T-cell (primary cell): ENCODE measurements at regions of chr20 and their contacts with region 1.

Region 1: GRCh38 chr20:3767427-3768341 is at the start of gene ADISSP:
- DNase-seq: peak; percentile 89 to 98 (median 94)
- ATAC-seq: peak; percentile 87 to 91 (median 90)
- H3K4me3 ChIP-seq: peak within 1 kb of the TSS; percentile 69 to 97
- H3K4me3 Mint-ChIP-seq: peak within 1 kb of the TSS; percentile 82 to 88 (median 84)
- H3K27ac ChIP-seq: peak within 1 kb of the TSS; percentile 100
- H3K27ac Mint-ChIP-seq: peak within 1 kb of the TSS; percentile 94 to 95
- H3K4me1 ChIP-seq: peaks cover 10 to 33% of the 10 kb centered on the region in 2 experiments
- H3K4me1 Mint-ChIP-seq: peaks cover 19 to 29% (median 26%) of the 10 kb centered on the region in 3 donors
- H3K27me3 ChIP-seq: peaks cover 0 to 9% of the 10 kb centered on the region in 2 experiments
- H3K27me3 Mint-ChIP-seq: no peaks in the 10 kb centered on the region
- total RNA-seq, gene ADISSP: 16.2 to 28.7 (median 22.6) TPM

Region 2: GRCh38 chr20:3786665-3787323 is 19.1 kb after region 1 on chr20 and contains the start of gene CENPB:
- CTCF ChIA-PET with region 1: interaction called in 1 of 2 experiments, 13 read pairs
- POLR2A ChIA-PET with region 1: interaction called in 1 of 2 experiments, 3 read pairs
- DNase-seq: peak; percentile 67 to 94 (median 81)
- ATAC-seq: peak; percentile 88 to 93 (median 91)
- H3K4me3 ChIP-seq: peak within 1 kb of the TSS; percentile 54 to 57
- H3K4me3 Mint-ChIP-seq: peak within 1 kb of the TSS; percentile 70 to 86 (median 75)
- H3K27ac ChIP-seq: peak within 1 kb of the TSS; percentile 76
- H3K27ac Mint-ChIP-seq: peak within 1 kb of the TSS; percentile 80 to 86
- H3K4me1 ChIP-seq: peaks cover 14 to 34% of the 10 kb centered on the region in 2 experiments
- H3K4me1 Mint-ChIP-seq: peaks cover 32 to 46% (median 42%) of the 10 kb centered on the region in 3 donors
- H3K27me3 ChIP-seq: no peaks in the 10 kb centered on the region
- H3K27me3 Mint-ChIP-seq: no peaks in the 10 kb centered on the region
- total RNA-seq, gene CENPB: 37.0 to 79.0 (median 60.8) TPM

Region 3: DNA sequence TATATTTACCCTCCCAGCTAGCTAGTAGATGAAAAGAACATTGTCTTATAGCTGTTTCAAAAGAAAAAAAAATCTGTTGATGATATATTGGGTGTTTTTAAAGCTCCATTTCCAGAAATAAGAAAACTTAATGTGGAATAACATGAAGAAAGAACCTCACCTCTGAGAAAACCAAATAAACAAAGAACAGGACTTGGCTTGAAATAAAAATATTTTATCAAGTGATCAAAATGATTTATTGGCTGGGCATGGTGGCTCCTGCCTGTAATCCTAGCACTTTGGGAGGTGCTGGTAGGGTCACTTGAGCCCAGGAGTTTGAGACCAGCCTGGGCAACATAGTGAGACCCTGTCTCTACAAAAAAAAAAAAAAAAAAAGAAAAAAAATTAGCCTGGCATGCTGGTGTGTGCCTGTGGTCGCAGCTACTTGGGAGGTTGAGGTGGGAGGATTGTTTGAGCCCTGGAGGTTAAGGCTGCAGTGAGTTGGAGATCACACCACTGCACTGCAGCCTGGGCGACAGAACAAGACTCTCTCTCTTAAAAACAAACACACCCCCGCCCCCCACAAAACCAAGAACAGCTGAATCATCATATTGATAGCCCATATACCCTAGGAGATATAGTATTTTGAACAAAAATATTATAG is 239.8 kb after region 1 on chr20:
- CTCF ChIA-PET with region 1: interaction called in 1 of 2 experiments, 11 read pairs
- POLR2A ChIA-PET with region 1: no interaction called
- DNase-seq: no peak
- ATAC-seq: no peak
- H3K4me3 ChIP-seq: no peak overlapping the region
- H3K4me3 Mint-ChIP-seq: no peak overlapping the region
- H3K27ac ChIP-seq: no peak overlapping the region
- H3K27ac Mint-ChIP-seq: no peak overlapping the region
- H3K4me1 ChIP-seq: peaks cover 2 to 3% of the 10 kb centered on the region in 2 experiments
- H3K4me1 Mint-ChIP-seq: peaks cover 17 to 42% (median 25%) of the 10 kb centered on the region in 3 donors
- H3K27me3 ChIP-seq: no peaks in the 10 kb centered on the region
- H3K27me3 Mint-ChIP-seq: no peaks in the 10 kb centered on the region